Activated CD4-positive, alpha-beta memory T cell treated with anti-CD3 and anti-CD28 coated beads, Interleukin-2, amount 10 ng/mL, durations not matched to agents 7 days and 5 days (primary cell): ENCODE measurements at regions of chr1 and their contacts with region 1.

Region 1: GRCh38 chr1:8423650-8424538 is 106.0 kb downstream of the SLC45A1 start:
- DNase-seq: peak; percentile 56
- H3K4me3 Mint-ChIP-seq: peak overlapping the region; percentile 84
- H3K27ac Mint-ChIP-seq: peak overlapping the region; percentile 94
- H3K4me1 Mint-ChIP-seq: peaks cover 40% of the 10 kb centered on the region
- H3K27me3 Mint-ChIP-seq: no peaks in the 10 kb centered on the region

Region 2: DNA sequence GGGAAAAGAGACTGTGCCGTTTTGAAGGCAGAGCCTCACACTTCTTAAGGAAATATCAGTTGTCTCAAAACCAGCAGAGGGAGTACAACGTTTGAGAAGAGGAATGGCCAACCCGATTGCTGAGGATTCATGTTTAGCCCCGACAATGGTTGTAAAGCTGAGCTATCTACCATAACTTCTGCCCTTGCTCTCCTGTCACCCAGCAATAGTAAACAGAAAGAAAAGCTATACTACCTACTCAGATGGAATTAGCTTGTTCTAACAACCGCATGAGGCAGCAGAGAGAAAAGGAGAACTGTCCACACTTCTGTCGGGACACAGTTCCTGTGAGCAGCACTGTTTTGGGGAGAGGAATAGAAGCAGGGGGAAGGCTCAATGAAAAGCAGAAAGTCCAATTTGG is 14.8 kb before region 1 on chr1:
- CTCF ChIA-PET with region 1: interaction called, 21 read pairs
- POLR2A ChIA-PET with region 1: interaction called, 9 read pairs
- DNase-seq: no peak
- H3K4me3 Mint-ChIP-seq: no peak overlapping the region
- H3K27ac Mint-ChIP-seq: peak overlapping the region; percentile 43
- H3K4me1 Mint-ChIP-seq: peaks cover 61% of the 10 kb centered on the region
- H3K27me3 Mint-ChIP-seq: no peaks in the 10 kb centered on the region

Region 3: GRCh38 chr1:8482979-8483391 is 59.1 kb after region 1 on chr1:
- CTCF ChIA-PET with region 1: no interaction called
- POLR2A ChIA-PET with region 1: no interaction called
- DNase-seq: no peak
- H3K4me3 Mint-ChIP-seq: no peak overlapping the region
- H3K27ac Mint-ChIP-seq: no peak overlapping the region
- H3K4me1 Mint-ChIP-seq: peaks cover 7% of the 10 kb centered on the region
- H3K27me3 Mint-ChIP-seq: no peaks in the 10 kb centered on the region

Region 4: DNA sequence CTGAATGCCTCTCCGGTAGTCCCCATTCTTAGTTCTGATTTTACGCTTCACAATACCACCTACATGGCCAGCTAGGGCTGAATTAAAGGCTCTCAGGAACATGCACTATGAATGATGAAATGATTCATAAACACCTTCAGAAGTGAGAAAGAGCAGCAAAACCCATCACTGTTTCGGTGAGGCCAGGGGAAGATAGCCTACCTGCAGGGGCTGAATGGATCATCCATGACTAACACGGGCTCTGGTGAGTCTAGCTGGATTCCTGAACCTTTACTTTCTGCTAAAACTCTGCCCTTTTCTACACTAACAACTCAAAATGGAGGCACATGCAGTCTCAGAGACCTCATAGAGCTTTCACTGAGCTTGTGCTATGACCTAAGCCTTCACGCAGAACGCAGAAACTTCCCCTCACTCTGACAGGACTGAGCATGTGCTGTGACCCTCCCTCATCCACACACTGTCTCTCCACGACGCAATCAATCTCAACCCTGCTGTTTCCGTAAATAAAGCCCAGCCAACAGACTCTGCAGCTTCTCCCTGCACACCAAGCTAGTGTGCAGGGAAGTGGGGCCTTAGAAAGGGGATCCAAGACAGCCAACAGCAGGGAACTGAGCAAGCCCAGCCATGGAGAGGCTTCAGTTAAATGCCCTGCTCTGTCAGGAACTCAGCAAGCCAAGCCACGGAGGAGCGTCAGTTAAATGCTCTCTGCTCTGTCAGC is 101.8 kb after region 1 on chr1:
- CTCF ChIA-PET with region 1: no interaction called
- POLR2A ChIA-PET with region 1: interaction called, 10 read pairs
- DNase-seq: peak; percentile 61
- H3K4me3 Mint-ChIP-seq: no peak overlapping the region
- H3K27ac Mint-ChIP-seq: no peak overlapping the region
- H3K4me1 Mint-ChIP-seq: peaks cover 14% of the 10 kb centered on the region
- H3K27me3 Mint-ChIP-seq: no peaks in the 10 kb centered on the region